Left colon (tissue), 2 donors: ENCODE measurements at regions of chr10 and their contacts with region 1.

Region 1: GRCh38 chr10:117318909-117319308 is 56.3 kb downstream of the PDZD8 start:
- DNase-seq: no peak
- ATAC-seq: no peak

Region 2: GRCh38 chr10:117216611-117217195 is 102.2 kb before region 1 on chr10:
- intact Hi-C with region 1: loop called in 1 of 2 experiments (anchors 10 kb)
- DNase-seq: peak; percentile 43 to 78
- ATAC-seq: peak; percentile 88